PC-3 (cell line): ENCODE measurements at regions of chr1 and their contacts with region 1.

Region 1: DNA sequence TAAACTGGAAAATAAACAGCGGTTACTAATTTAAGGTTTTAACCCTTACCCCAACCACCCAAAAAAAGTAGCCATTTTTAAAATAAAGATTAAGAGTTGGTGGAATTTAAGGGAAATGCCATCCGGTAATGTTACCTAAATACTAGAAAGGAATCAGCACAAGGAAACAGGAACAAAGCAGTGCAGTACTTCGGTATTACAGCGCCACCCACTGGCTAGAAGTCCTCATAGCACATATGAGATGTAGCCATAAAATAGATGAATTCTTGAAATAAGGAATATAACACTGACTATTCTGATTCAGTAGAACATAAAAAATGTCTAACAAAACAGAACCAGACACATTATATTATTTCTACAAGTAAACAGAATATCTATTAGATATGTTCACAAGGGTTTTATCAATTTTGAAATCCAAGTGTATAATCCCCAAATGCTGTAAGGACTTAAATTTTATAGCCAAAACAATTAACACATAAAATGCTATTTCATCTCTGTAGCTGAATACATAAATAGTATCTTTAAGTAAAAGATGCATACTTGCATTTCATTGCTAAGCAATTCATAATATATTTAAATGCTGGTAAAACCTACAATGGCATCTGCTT is 58.8 kb downstream of the FRRS1 start:
- DNase-seq: peak; percentile 81
- ATAC-seq: peak; percentile 77
- H3K4me3 ChIP-seq: no peak overlapping the region
- H3K27ac ChIP-seq: no peak overlapping the region
- H3K4me1 ChIP-seq: no peaks in the 10 kb centered on the region
- H3K27me3 ChIP-seq: no peaks in the 10 kb centered on the region
- CTCF ChIP-seq: peak; percentile 96

Region 2: DNA sequence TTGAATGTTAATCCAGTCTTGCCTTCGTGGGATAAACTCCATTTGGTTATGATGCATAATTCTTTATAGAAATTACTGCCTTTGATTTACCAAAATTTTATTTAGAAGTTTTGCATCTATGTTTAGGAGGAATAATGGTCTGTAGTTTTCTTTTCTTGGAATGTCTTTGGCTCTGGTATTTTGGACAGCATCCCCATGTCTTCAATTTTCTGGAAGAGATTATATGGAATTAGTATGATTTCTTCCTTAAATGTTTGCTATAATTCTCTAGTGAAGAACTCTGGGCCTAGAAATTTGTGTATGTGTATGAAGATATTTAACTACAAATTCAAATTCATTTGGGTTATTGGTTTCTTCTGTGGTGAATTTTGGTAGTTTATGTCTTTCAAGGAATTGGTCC is 953.5 kb before region 1 on chr1:
- CTCF ChIA-PET with region 1: no interaction called
- POLR2A ChIA-PET with region 1: no interaction called
- intact Hi-C with region 1: loop called (anchors 10 kb)
- DNase-seq: no peak
- ATAC-seq: no peak
- H3K4me3 ChIP-seq: no peak overlapping the region
- H3K27ac ChIP-seq: no peak overlapping the region
- H3K4me1 ChIP-seq: no peaks in the 10 kb centered on the region
- H3K27me3 ChIP-seq: no peaks in the 10 kb centered on the region
- CTCF ChIP-seq: no peak

Region 3: GRCh38 chr1:99565606-99566289 is 141.9 kb before region 1 on chr1:
- CTCF ChIA-PET with region 1: no interaction called
- POLR2A ChIA-PET with region 1: interaction called, 3 read pairs
- intact Hi-C with region 1: loop called (anchors 10 kb)
- DNase-seq: peak; percentile 92
- ATAC-seq: peak; percentile 58
- H3K4me3 ChIP-seq: peak overlapping the region; percentile 31; the same call in 1 of the 2 replicates
- H3K27ac ChIP-seq: peak overlapping the region; percentile 88
- H3K4me1 ChIP-seq: peaks cover 58% of the 10 kb centered on the region
- H3K27me3 ChIP-seq: no peaks in the 10 kb centered on the region
- CTCF ChIP-seq: no peak